Activated naive CD4-positive, alpha-beta T cell treated with anti-CD3 and anti-CD28 coated beads, Interleukin-2, amount 10 ng/mL, durations not matched to agents 7 days and 5 days (primary cell): ENCODE measurements at regions of chr15 and their contacts with region 1.

Region 1: DNA sequence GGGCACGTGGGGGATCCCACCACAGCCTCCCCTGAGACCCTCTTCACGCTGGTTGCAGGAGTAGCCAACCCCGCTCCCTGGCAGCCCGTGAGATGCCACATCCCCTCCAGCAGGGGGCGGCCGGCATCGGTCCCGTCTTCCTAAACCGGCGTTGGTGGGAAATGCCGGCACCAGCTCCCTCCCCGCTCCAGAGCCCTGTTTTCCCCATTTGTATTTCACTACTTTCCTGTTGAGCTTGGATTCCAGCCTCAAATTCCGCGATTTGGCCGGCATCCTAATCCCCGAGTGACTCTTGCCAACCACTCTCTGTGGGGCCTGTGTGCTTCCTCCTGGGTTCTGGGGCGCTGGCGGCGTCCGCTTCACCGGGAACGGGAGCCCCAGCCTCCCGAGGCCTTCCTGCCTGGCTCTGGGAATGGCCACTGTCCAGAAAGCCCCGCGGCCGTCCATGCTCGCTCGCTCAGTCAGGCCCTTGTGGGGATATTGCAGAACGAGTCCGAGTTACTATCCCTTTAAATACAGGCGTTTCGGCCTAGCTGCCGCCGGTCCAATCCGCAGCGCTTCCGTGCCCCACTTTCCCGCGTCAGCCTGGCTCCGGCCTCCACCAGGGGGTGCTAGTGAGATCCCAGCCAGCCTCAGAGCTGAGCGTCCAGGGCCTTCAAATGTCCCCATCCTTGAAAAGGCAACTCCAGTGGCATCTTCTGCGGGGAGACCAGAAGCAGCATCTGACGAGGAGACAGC is 8.1 kb upstream of the ADAMTS17 start:
- DNase-seq: peak; percentile 93
- H3K4me3 Mint-ChIP-seq: peak overlapping the region; percentile 88
- H3K27ac Mint-ChIP-seq: peak overlapping the region; percentile 83
- H3K4me1 Mint-ChIP-seq: peaks cover 22% of the 10 kb centered on the region
- H3K27me3 Mint-ChIP-seq: peaks cover 16% of the 10 kb centered on the region

Region 2: GRCh38 chr15:100318884-100319283 is 31.0 kb before region 1 on chr15:
- CTCF ChIA-PET with region 1: no interaction called
- DNase-seq: no peak
- H3K4me3 Mint-ChIP-seq: no peak overlapping the region
- H3K27ac Mint-ChIP-seq: no peak overlapping the region
- H3K4me1 Mint-ChIP-seq: no peaks in the 10 kb centered on the region
- H3K27me3 Mint-ChIP-seq: no peaks in the 10 kb centered on the region

Region 3: GRCh38 chr15:100330629-100331215 is 19.1 kb before region 1 on chr15:
- CTCF ChIA-PET with region 1: interaction called, 78 read pairs
- DNase-seq: peak; percentile 74
- H3K4me3 Mint-ChIP-seq: peak overlapping the region; percentile 57
- H3K27ac Mint-ChIP-seq: peak overlapping the region; percentile 94
- H3K4me1 Mint-ChIP-seq: peaks cover 80% of the 10 kb centered on the region
- H3K27me3 Mint-ChIP-seq: peaks cover 22% of the 10 kb centered on the region

Region 4: DNA sequence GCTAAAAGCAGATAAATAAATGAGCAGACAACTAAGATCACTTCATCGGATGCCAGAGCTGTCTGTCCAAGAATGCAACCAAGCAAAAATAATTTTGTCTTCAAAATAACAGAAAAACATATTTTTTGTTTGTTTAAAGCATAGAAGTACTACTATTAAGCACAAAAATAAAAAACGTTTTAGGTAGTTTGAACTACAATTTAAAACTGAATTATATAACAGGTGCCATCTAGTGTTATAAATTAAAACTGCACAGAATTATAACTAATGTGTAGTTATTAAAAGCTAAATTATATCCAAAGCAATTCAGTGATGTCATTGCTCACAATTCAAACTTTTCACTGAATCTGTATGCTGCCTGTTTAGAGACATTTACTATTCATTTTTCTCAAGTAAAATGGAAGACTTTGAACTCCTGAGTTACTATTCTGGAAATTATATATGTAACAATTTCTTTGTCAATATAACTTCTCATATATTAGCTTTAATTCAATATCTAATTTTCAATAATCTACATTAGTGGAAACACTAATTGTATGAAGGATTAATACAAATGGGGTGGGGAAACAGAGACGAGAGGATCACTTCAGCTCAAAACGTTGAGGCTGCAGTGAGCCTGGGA is 222.6 kb after region 1 on chr15:
- CTCF ChIA-PET with region 1: interaction called, 42 read pairs
- DNase-seq: no peak
- H3K4me3 Mint-ChIP-seq: peak overlapping the region; percentile 68
- H3K27ac Mint-ChIP-seq: peak overlapping the region; percentile 93
- H3K4me1 Mint-ChIP-seq: peaks cover 76% of the 10 kb centered on the region
- H3K27me3 Mint-ChIP-seq: no peaks in the 10 kb centered on the region

Region 5: GRCh38 chr15:100602064-100602822 is 252.4 kb after region 1 on chr15 and contains the starts of genes ASB7 and LINS1:
- CTCF ChIA-PET with region 1: interaction called, 16 read pairs
- DNase-seq: peak; percentile 100
- H3K4me3 Mint-ChIP-seq: no peak within 1 kb of the TSS
- H3K27ac Mint-ChIP-seq: no peak within 1 kb of the TSS
- H3K4me1 Mint-ChIP-seq: peaks cover 62% of the 10 kb centered on the region
- H3K27me3 Mint-ChIP-seq: no peaks in the 10 kb centered on the region

Region 6: GRCh38 chr15:100873029-100873677 is 523.3 kb after region 1 on chr15:
- CTCF ChIA-PET with region 1: interaction called, 20 read pairs
- DNase-seq: peak; percentile 62
- H3K4me3 Mint-ChIP-seq: no peak overlapping the region
- H3K27ac Mint-ChIP-seq: no peak overlapping the region
- H3K4me1 Mint-ChIP-seq: no peaks in the 10 kb centered on the region
- H3K27me3 Mint-ChIP-seq: peaks cover 51% of the 10 kb centered on the region